ENCODE measurements at regions of chr11 and their contacts with region 1.

Region 1: DNA sequence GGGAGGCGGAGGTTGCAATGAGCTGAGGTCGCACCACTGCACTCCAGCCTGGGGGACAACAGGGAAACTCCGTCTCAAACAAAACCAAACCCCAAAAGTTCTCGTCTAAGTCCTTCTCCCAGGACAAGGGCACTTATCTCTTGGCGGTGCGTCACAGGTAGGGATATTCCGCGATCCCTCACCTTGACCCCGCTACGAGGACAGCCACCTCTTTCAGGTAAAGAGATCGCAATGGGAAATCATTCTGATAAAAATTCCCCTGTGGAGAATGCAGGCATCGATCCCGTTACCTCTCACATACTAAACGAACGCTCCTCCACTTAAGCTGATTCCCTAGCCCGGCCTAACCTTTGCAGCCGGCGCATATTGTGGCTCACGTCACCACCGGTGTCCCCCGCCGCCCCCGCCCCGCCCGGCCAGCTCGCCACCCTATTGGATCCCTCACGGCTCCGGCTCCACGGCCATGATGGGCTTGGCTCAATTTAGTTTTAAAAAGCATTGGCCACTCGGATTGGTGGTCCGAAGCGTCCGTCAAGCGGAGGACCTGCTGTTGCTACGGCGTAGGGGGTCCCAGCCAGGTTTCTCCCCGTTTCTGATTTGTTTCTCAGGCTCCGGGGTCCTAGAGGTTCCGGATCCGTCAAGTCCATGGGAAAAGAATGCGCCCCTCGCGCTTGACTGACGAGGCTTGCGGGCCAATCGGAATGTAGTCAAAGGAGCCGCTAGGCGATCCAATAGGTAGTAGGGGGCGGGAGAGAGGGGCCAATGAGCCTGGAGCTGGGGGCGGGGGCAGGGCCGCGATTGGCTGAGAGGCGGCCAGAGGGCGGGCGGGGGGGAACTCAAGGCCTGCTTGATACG is 439 bp upstream of the PPP6R3 start:
- DNase-seq: peak; percentile 98
- H3K4me3 Mint-ChIP-seq: peak overlapping the region; percentile 91
- H3K27ac Mint-ChIP-seq: peak overlapping the region; percentile 89
- H3K4me1 Mint-ChIP-seq: peaks cover 30% of the 10 kb centered on the region
- H3K27me3 Mint-ChIP-seq: no peaks in the 10 kb centered on the region

Region 2: DNA sequence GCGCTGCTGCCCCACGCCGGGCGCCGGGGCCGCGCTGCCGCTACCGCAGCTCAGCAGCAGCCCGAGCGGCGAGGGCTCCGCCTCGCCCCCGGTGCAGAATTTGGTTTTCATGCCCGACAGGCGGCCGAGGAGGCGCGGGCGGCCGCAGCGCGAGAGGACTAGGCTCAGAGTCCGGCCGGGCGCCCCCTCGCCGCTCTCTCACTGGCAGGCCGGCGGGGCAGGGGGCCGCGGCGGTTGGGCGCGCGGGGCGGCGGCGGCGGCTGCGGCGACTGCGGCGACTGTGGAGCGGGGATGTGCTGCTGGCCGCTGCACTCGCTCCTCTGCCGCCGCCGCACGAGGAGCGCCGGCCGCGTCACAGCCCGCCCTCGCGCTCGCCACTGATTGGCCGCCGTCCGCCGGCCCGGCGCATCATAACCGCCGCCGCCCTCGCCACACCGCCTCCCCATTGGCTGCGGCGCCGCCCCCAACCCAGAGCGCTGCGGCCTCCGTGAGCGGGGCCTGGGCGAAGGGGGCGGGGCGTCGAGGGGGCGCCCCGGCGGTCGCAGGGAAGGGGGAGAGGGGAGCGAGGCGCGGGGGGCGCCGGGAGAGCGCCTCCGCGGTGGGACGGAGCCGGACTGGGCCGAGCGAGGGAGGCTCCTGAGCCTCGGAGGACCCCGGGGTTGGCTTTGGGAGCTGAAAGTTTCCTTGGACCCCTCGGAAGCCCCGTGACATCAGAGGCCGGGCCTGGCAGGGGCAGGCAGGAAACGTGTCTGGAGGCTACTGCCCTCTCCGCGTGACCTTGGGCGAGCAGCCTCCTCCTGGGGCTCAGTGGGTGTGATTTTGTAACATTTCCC is 338.8 kb before region 1 on chr11 and contains the start of gene CHKA:
- CTCF ChIA-PET with region 1: no interaction called
- intact Hi-C with region 1: no loop called
- DNase-seq: peak; percentile 87
- H3K4me3 Mint-ChIP-seq: peak within 1 kb of the TSS; percentile 73
- H3K27ac Mint-ChIP-seq: no peak within 1 kb of the TSS
- H3K4me1 Mint-ChIP-seq: peaks cover 7% of the 10 kb centered on the region
- H3K27me3 Mint-ChIP-seq: no peaks in the 10 kb centered on the region
- total RNA-seq, gene CHKA: 6.8 to 7.1 TPM

Region 3: DNA sequence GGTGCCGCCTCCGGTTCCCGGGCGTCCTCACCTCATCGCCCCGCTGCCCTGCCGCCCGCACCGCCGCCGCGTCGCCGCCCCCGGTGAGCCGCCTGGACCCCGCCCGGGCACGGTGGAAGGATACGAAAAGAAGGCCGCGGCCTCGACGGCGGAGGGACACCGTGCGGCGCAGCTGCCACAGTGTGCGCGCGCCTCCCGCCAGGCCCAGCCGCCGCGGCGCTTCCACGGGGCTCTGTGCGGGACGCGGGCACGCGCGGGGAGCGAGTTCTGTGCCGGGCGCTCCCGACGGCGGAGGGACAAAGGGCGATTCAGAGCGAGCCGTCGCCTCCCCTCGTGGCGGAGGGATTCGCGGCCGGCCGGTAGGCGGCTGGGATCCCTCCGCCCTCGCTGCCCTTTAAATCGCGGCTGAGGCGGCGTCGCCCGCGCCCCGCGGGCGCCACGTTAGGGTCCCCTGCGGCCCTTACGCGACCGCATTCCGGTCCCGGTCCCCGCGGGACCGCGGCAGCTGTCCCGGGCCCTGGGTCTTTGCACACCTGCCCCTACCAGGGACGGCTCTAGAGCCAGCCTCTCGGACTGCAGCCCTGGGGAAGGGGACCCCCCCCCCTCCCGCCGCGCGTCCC is 246.4 kb before region 1 on chr11:
- CTCF ChIA-PET with region 1: no interaction called
- intact Hi-C with region 1: loop called (anchors 5 kb)
- DNase-seq: peak; percentile 71
- H3K4me3 Mint-ChIP-seq: peak overlapping the region; percentile 73
- H3K27ac Mint-ChIP-seq: no peak overlapping the region
- H3K4me1 Mint-ChIP-seq: peaks cover 42% of the 10 kb centered on the region
- H3K27me3 Mint-ChIP-seq: peaks cover 7% of the 10 kb centered on the region

Region 4: GRCh38 chr11:68471360-68472340 is 11.5 kb after region 1 on chr11:
- CTCF ChIA-PET with region 1: no interaction called
- intact Hi-C with region 1: loop called (anchors 1 kb)
- DNase-seq: peak; percentile 85
- H3K4me3 Mint-ChIP-seq: peak overlapping the region; percentile 57
- H3K27ac Mint-ChIP-seq: peak overlapping the region; percentile 90
- H3K4me1 Mint-ChIP-seq: peaks cover 73% of the 10 kb centered on the region
- H3K27me3 Mint-ChIP-seq: no peaks in the 10 kb centered on the region

Region 5: DNA sequence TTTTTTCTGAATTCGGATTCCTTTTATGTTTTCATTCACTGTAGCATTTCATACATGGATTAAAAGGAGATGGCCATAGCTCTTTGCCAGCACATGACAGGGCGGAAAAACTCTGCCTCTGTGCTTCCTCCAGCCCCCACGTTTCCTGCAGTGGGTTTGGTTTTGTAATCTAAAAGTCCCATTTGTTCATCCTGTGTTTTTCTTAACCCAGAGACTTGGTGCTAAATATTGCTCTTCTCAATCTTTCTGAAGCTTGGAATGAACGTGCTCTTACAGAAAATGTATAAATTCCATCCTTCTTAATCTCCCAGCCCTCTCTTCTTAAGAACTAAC is 90.3 kb after region 1 on chr11:
- CTCF ChIA-PET with region 1: interaction called, 4 read pairs
- intact Hi-C with region 1: loop called (anchors 5 kb)
- DNase-seq: peak; percentile 61
- H3K4me3 Mint-ChIP-seq: peak overlapping the region; percentile 44
- H3K27ac Mint-ChIP-seq: peak overlapping the region; percentile 91
- H3K4me1 Mint-ChIP-seq: peaks cover 64% of the 10 kb centered on the region
- H3K27me3 Mint-ChIP-seq: no peaks in the 10 kb centered on the region

Region 6: GRCh38 chr11:68751004-68751856 is 291.1 kb after region 1 on chr11 and contains the start of gene TESMIN:
- CTCF ChIA-PET with region 1: no interaction called
- intact Hi-C with region 1: loop called (anchors 1 kb)
- DNase-seq: peak; percentile 97
- H3K4me3 Mint-ChIP-seq: peak within 1 kb of the TSS; percentile 65
- H3K27ac Mint-ChIP-seq: no peak within 1 kb of the TSS
- H3K4me1 Mint-ChIP-seq: peaks cover 9% of the 10 kb centered on the region
- H3K27me3 Mint-ChIP-seq: no peaks in the 10 kb centered on the region
- total RNA-seq, gene TESMIN: 6.2 to 7.3 TPM

Region 7: GRCh38 chr11:69048718-69049489 is 588.8 kb after region 1 on chr11 and contains the start of gene TPCN2:
- CTCF ChIA-PET with region 1: no interaction called
- intact Hi-C with region 1: loop called (anchors 5 kb)
- DNase-seq: peak; percentile 90
- H3K4me3 Mint-ChIP-seq: peak within 1 kb of the TSS; percentile 72
- H3K27ac Mint-ChIP-seq: peak within 1 kb of the TSS; percentile 66
- H3K4me1 Mint-ChIP-seq: peaks cover 16% of the 10 kb centered on the region
- H3K27me3 Mint-ChIP-seq: no peaks in the 10 kb centered on the region
- total RNA-seq, gene TPCN2: 7.0 to 8.0 TPM